Dendritic cell treated with granulocyte-macrophage colony-stimulating factor and Interleukin-4, amounts not matched to agents 40 ng/mL and 50 ng/mL, for 4 days (primary cell): ENCODE measurements at regions of chr12 and their contacts with region 1.

Region 1: GRCh38 chr12:9237286-9237685 is 29.1 kb upstream of the PZP start:
- H3K4me3 Mint-ChIP-seq: no peak overlapping the region
- H3K27ac Mint-ChIP-seq: no peak overlapping the region
- H3K4me1 Mint-ChIP-seq: peaks cover 6% of the 10 kb centered on the region
- H3K27me3 Mint-ChIP-seq: peaks cover 23% of the 10 kb centered on the region

Region 2: GRCh38 chr12:9073076-9073475 is 164.2 kb before region 1 on chr12:
- intact Hi-C with region 1: loop called (anchors 10 kb)
- H3K4me3 Mint-ChIP-seq: no peak overlapping the region
- H3K27ac Mint-ChIP-seq: no peak overlapping the region
- H3K4me1 Mint-ChIP-seq: no peaks in the 10 kb centered on the region
- H3K27me3 Mint-ChIP-seq: peaks cover 11% of the 10 kb centered on the region

Region 3: GRCh38 chr12:9103050-9103849 is 134.0 kb before region 1 on chr12:
- intact Hi-C with region 1: no loop called
- H3K4me3 Mint-ChIP-seq: no peak overlapping the region
- H3K27ac Mint-ChIP-seq: no peak overlapping the region
- H3K4me1 Mint-ChIP-seq: peaks cover 8% of the 10 kb centered on the region
- H3K27me3 Mint-ChIP-seq: no peaks in the 10 kb centered on the region

Region 4: GRCh38 chr12:9221483-9221882 is 15.8 kb before region 1 on chr12:
- intact Hi-C with region 1: no loop called
- H3K4me3 Mint-ChIP-seq: no peak overlapping the region
- H3K27ac Mint-ChIP-seq: no peak overlapping the region
- H3K4me1 Mint-ChIP-seq: no peaks in the 10 kb centered on the region
- H3K27me3 Mint-ChIP-seq: peaks cover 2% of the 10 kb centered on the region